ENCODE measurements at regions of chr11 and their contacts with region 1.

Region 1: GRCh38 chr11:76235233-76236091 is 29.2 kb upstream of the WNT11 start:
- DNase-seq: peak; percentile 87 to 97 (median 92)
- H3K4me3 ChIP-seq: peak overlapping the region; percentile 53 to 95 (median 85)
- H3K27ac ChIP-seq: peak overlapping the region; percentile 27 to 98 (median 90)
- H3K27me3 ChIP-seq: no peaks in the 10 kb centered on the region
- CTCF ChIP-seq: peak in 16 of 56 donors; percentile 2 to 33 (median 18)

Region 2: GRCh38 chr11:75896843-75897419 is 338.5 kb before region 1 on chr11:
- intact Hi-C with region 1: loop called in 1 of 2 experiments (anchors 10 kb)
- DNase-seq: no peak
- H3K4me3 ChIP-seq: no peak overlapping the region
- H3K27ac ChIP-seq: peak overlapping the region in 26 of 59 donors; percentile 1 to 73 (median 43)
- H3K27me3 ChIP-seq: no peaks in the 10 kb centered on the region
- CTCF ChIP-seq: peak; percentile 66 to 96 (median 85)

Region 3: GRCh38 chr11:76380967-76381719 is 145.7 kb after region 1 on chr11 and contains the starts of genes GVQW3 and THAP12:
- intact Hi-C with region 1: loop called (anchors 2 to 10 kb)
- DNase-seq: peak; percentile 88 to 97 (median 94)
- H3K4me3 ChIP-seq: peak within 1 kb of the TSS; percentile 63 to 99 (median 90)
- H3K27ac ChIP-seq: peak within 1 kb of the TSS in 53 of 59 donors; percentile 12 to 90 (median 77)
- H3K27me3 ChIP-seq: no peaks in the 10 kb centered on the region
- CTCF ChIP-seq: peak in 44 of 56 donors; percentile 6 to 63 (median 30)
- total RNA-seq, gene GVQW3: 10.9 to 28.8 (median 18.6) TPM
- total RNA-seq, gene THAP12: 19.0 to 37.6 (median 26.2) TPM

Region 4: DNA sequence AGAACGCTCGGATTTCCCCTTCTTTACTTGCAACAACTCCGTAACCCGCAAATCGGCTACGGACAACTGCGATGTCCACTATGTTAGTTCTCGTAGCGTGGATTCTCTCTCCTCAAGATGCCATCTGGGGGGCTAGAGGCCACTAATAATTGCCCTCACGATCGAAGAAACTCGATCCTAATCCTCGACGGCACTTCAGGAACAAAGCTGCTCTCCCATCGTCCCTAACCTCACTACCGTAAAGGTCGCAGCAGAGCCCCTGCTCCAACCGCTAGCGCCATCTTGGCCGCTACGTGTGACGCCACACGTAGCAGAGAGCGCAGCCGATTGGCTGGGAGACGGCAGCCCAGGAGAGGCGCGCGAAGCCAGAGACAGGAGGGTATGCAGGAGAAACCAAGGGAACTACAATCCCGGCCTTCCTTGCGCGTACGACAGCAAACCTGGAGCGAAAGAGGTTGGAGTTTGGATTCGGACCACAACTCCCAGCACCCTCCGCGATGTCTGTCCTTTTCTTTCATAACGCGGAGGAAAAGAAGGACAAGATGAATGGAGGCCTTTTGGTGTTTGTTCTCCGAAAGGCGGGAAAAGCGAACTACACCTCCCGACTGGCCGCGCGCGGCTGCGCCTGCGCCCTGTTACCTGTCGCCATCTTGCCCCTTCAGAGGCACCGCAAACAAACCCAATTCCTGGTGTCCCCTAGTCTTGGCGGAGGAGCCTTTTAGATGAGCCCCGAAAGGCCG is 209.1 kb after region 1 on chr11 and contains the start of gene EMSY:
- intact Hi-C with region 1: loop called in 1 of 2 experiments (anchors 5 kb)
- DNase-seq: peak; percentile 96 to 99 (median 99)
- H3K4me3 ChIP-seq: peak within 1 kb of the TSS; percentile 62 to 100 (median 98)
- H3K27ac ChIP-seq: peak within 1 kb of the TSS; percentile 28 to 98 (median 94)
- H3K27me3 ChIP-seq: no peaks in the 10 kb centered on the region
- CTCF ChIP-seq: peak in 46 of 56 donors; percentile 8 to 69 (median 39)
- total RNA-seq, gene EMSY: 26.3 to 56.1 (median 37.3) TPM